ENCODE measurements at regions of chr9 and their contacts with region 1.

Region 1: DNA sequence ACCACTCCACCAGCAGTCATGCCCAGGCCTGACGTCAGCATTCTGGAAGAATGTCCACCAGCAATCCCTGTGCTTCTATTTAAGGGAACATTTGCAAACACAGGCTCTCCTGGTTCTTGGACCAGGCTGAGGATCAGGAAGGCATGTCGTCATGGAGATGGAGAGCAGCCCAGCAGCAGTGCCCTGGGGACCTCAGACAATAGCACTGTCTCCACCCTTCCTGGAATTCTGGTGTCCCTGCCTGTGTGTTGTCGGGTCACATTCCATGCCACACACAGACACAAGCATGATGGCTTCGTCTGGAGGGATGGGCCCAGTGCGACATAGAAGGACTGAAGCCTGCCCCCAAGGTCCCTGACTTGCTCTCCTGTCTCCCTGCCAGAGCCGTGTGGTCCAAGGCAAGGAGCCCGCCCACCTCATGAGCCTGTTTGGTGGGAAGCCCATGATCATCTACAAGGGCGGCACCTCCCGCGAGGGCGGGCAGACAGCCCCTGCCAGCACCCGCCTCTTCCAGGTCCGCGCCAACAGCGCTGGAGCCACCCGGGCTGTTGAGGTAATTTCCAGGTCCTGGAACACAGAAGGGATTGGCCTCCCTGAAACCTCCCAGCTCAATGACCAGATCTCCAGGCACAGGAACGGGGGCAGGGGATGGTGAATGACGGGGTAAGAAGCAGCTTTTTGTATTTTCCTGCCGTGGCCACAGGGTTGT is 43.8 kb downstream of the STOM start:
- DNase-seq: peak; percentile 98
- H3K4me3 ChIP-seq: no peak overlapping the region
- H3K27ac ChIP-seq: peak overlapping the region; percentile 91 to 99 (median 94)
- H3K4me1 ChIP-seq: peaks cover 0 to 71% (median 65%) of the 10 kb centered on the region in 4 donors
- H3K27me3 ChIP-seq: no peaks in the 10 kb centered on the region
- CTCF ChIP-seq: no peak
- EP300 ChIP-seq: peak; percentile 94 to 99 (median 98)
- POLR2A ChIP-seq: no peak

Region 2: GRCh38 chr9:120960001-120960400 is 366.3 kb before region 1 on chr9:
- intact Hi-C with region 1: no loop called
- DNase-seq: no peak
- H3K4me3 ChIP-seq: no peak overlapping the region
- H3K27ac ChIP-seq: no peak overlapping the region
- H3K4me1 ChIP-seq: no peaks in the 10 kb centered on the region
- H3K27me3 ChIP-seq: no peaks in the 10 kb centered on the region
- CTCF ChIP-seq: no peak
- EP300 ChIP-seq: no peak
- POLR2A ChIP-seq: no peak

Region 3: GRCh38 chr9:121289026-121289771 is 37.1 kb before region 1 on chr9:
- intact Hi-C with region 1: loop called (anchors 2 kb)
- DNase-seq: peak; percentile 94
- H3K4me3 ChIP-seq: peak overlapping the region in 2 of 4 donors; percentile 8 to 16
- H3K27ac ChIP-seq: peak overlapping the region; percentile 94 to 99 (median 97)
- H3K4me1 ChIP-seq: peaks cover 2 to 99% (median 93%) of the 10 kb centered on the region in 4 donors
- H3K27me3 ChIP-seq: no peaks in the 10 kb centered on the region
- CTCF ChIP-seq: no peak
- EP300 ChIP-seq: peak in 1 of 4 donors; percentile 15
- POLR2A ChIP-seq: no peak

Region 4: DNA sequence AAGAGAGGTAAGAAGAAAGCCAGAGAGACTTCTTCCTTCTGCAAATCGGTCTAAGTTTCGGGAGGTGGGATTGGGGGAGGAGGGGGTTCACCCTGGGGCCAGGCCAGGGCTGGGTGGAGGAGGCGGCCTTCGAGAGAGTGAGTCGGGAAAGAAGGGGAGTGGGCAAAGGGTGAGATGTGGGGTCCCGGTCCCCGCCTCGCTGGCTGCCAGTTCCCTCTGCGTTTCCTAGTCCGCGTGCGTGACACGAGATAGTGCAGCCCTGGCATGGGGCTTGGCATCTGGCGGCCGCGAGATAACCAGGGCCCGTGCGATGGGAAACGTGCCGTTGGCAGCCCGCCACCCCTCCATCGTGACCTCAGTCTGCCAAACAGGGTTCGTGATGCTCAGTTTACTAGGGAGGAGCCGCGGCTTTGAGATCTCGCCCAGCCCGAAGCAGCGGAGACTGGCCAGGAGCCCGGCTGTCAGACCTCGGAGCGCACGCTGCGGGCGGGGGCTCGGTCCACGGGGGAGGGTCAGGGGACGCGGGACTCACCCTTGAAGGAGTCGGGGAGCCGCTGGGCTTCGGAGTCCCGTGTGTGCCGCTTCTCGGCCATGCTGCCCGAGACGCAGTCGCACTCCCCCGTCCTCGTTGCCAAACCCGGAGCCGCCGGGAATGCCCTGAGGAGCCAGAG is 43.4 kb after region 1 on chr9 and contains the start of gene STOM:
- intact Hi-C with region 1: loop called (anchors 1 kb)
- DNase-seq: peak; percentile 97
- H3K4me3 ChIP-seq: peak within 1 kb of the TSS; percentile 59 to 82 (median 78)
- H3K27ac ChIP-seq: peak within 1 kb of the TSS; percentile 91 to 99 (median 96)
- H3K4me1 ChIP-seq: peaks cover 0 to 77% (median 69%) of the 10 kb centered on the region in 4 donors
- H3K27me3 ChIP-seq: no peaks in the 10 kb centered on the region
- CTCF ChIP-seq: no peak
- EP300 ChIP-seq: peak in 3 of 4 donors; percentile 26 to 88 (median 45)
- POLR2A ChIP-seq: peak; percentile 98 to 99
- total RNA-seq, gene STOM: 303 to 609 (median 321) TPM

Region 5: DNA sequence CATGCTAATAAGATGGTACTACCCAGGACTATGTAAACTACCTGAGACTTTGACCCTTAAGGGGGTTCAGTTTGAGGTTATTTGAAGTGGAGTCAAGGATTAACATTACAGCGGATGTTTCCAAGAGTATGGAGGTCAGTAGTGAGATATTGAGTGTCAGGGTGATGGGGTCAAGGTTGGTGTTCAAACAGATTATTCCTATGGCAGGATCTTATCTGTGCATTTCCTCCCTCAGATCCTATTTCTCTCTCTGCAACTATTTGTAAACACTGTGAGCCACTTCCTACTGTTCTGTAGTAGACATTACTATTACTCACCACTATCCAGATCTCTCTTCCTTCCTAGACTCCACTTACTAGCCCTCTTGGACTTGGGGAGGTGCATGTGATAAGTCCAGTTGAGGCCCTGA is 97.7 kb after region 1 on chr9:
- intact Hi-C with region 1: no loop called
- DNase-seq: no peak
- H3K4me3 ChIP-seq: no peak overlapping the region
- H3K27ac ChIP-seq: no peak overlapping the region
- H3K4me1 ChIP-seq: no peaks in the 10 kb centered on the region
- H3K27me3 ChIP-seq: no peaks in the 10 kb centered on the region
- CTCF ChIP-seq: no peak
- EP300 ChIP-seq: no peak
- POLR2A ChIP-seq: no peak

Measured in sigmoid colon (tissue), 7 donors.